ENCODE measurements at regions of chr6 and their contacts with region 1.

Region 1: GRCh38 chr6:34696739-34697543 is at the start of gene ILRUN:
- DNase-seq: peak; percentile 79 to 96
- H3K4me3 ChIP-seq: peak within 1 kb of the TSS; percentile 99
- H3K27ac ChIP-seq: peak within 1 kb of the TSS; percentile 51
- H3K4me1 ChIP-seq: peaks cover 29% of the 10 kb centered on the region
- H3K27me3 ChIP-seq: no peaks in the 10 kb centered on the region
- CTCF ChIP-seq: no peak
- total RNA-seq, gene ILRUN: 57.8 and 68.9 TPM in 2 replicates

Region 2: DNA sequence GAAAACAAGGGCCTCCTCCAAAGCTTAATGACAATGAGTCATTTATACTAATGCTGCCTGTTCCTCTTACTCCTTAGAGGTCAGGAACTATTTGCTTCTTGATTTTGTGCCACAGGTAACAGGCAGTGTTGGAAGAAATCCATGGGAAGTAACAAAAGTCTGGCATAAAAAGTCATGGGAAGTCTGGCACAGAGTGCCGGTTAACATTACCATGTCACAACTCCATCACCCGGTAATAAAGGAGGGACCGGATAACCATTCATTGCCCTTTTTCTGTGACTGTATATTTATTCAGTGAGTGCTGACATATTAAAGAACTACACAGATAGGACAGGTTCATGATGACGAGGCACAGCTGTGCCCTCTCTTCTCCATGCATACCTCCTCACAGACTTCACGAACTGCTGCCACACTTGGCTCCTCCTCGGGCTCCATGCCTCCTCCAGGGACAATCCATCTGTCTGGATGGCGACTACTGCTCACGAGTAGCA is 355.4 kb before region 1 on chr6:
- CTCF ChIA-PET with region 1: interaction called, 11 read pairs
- POLR2A ChIA-PET with region 1: no interaction called
- intact Hi-C with region 1: no loop called
- DNase-seq: no peak
- H3K4me3 ChIP-seq: no peak overlapping the region
- H3K27ac ChIP-seq: no peak overlapping the region
- H3K4me1 ChIP-seq: peaks cover 32% of the 10 kb centered on the region
- H3K27me3 ChIP-seq: no peaks in the 10 kb centered on the region
- CTCF ChIP-seq: no peak

Region 3: GRCh38 chr6:34680802-34681515 is 16.0 kb before region 1 on chr6:
- CTCF ChIA-PET with region 1: interaction called, 8 read pairs
- POLR2A ChIA-PET with region 1: interaction called, 11 read pairs
- intact Hi-C with region 1: no loop called
- DNase-seq: peak in 1 of 2 experiments; percentile 73
- H3K4me3 ChIP-seq: no peak overlapping the region
- H3K27ac ChIP-seq: peak overlapping the region; percentile 59
- H3K4me1 ChIP-seq: peaks cover 29% of the 10 kb centered on the region
- H3K27me3 ChIP-seq: no peaks in the 10 kb centered on the region
- CTCF ChIP-seq: no peak

Region 4: GRCh38 chr6:34829137-34829536 is 132.2 kb after region 1 on chr6:
- CTCF ChIA-PET with region 1: no interaction called
- POLR2A ChIA-PET with region 1: no interaction called
- intact Hi-C with region 1: no loop called
- DNase-seq: no peak
- H3K4me3 ChIP-seq: no peak overlapping the region
- H3K27ac ChIP-seq: no peak overlapping the region
- H3K4me1 ChIP-seq: peaks cover 3% of the 10 kb centered on the region
- H3K27me3 ChIP-seq: no peaks in the 10 kb centered on the region
- CTCF ChIP-seq: no peak

Measured in PC-9 (cell line).